ENCODE measurements at regions of chr2 and their contacts with region 1.

Region 1: DNA sequence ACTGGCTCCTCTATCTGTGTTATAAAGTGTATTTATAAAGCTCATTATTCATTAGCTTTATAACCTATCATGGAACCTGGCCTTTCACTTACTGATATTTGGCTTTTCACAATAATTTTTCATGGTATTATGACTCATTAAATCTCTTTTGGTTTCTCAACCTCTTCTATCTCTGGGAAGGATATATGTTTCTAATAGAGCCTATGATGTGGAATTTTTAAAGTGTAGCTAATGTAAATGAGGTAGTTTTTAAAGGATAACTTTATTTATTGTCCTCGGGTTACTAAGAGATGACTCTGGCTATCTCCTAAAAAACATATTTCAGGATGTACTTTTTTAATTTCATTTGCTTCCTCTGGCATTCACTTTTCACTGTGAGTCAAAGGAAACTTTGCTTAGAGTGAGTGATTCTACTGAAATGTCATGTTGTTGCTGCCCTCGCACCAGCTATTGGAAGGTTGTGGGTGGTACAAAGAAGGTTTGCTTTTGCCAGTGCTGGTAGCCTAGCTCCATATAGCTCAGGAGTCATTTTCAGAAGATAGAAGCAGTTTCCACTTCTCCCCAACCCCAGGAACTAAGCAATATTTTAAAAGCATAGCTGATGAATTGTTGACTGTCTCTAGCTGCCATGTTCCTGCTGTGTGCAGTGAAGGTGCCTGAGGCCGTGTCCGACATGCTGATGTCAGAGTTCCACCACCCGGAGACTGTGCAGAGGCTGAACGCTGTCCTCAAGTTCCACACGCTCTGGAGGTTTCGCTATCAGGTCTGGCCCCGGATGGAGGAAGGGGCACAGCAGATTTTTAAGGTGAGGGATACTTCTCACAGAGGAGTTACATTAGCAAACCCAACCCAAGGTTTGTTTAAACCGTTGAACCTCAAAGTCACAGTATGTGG is 85.0 kb upstream of the RPE start:
- DNase-seq: no peak
- ATAC-seq: no peak
- H3K4me3 ChIP-seq: no peak overlapping the region
- H3K4me3 Mint-ChIP-seq: no peak overlapping the region
- H3K27ac ChIP-seq: no peak overlapping the region
- H3K27ac Mint-ChIP-seq: no peak overlapping the region
- H3K4me1 ChIP-seq: no peaks in the 10 kb centered on the region
- H3K4me1 Mint-ChIP-seq: no peaks in the 10 kb centered on the region
- H3K27me3 ChIP-seq: peaks cover 2% of the 10 kb centered on the region in 2 experiments
- H3K27me3 Mint-ChIP-seq: peaks cover 11% of the 10 kb centered on the region in 2 donors

Region 2: GRCh38 chr2:208101716-208102631 is 1815.4 kb before region 1 on chr2:
- CTCF ChIA-PET with region 1: no interaction called
- POLR2A ChIA-PET with region 1: no interaction called
- DNase-seq: no peak
- ATAC-seq: no peak
- H3K4me3 ChIP-seq: no peak overlapping the region
- H3K4me3 Mint-ChIP-seq: no peak overlapping the region
- H3K27ac ChIP-seq: no peak overlapping the region
- H3K27ac Mint-ChIP-seq: peak overlapping the region in 1 of 2 donors; percentile 60
- H3K4me1 ChIP-seq: peaks cover 0 to 2% of the 10 kb centered on the region in 2 experiments
- H3K4me1 Mint-ChIP-seq: peaks cover 23 to 31% (median 28%) of the 10 kb centered on the region in 3 donors
- H3K27me3 ChIP-seq: peaks cover 0 to 8% of the 10 kb centered on the region in 2 experiments
- H3K27me3 Mint-ChIP-seq: peaks cover 2 to 15% of the 10 kb centered on the region in 2 donors

Region 3: GRCh38 chr2:209929369-209929768 is 12.0 kb after region 1 on chr2:
- CTCF ChIA-PET with region 1: no interaction called
- POLR2A ChIA-PET with region 1: interaction called, 3 to 10 read pairs
- DNase-seq: no peak
- ATAC-seq: no peak
- H3K4me3 ChIP-seq: no peak overlapping the region
- H3K4me3 Mint-ChIP-seq: no peak overlapping the region
- H3K27ac ChIP-seq: no peak overlapping the region
- H3K27ac Mint-ChIP-seq: no peak overlapping the region
- H3K4me1 ChIP-seq: no peaks in the 10 kb centered on the region
- H3K4me1 Mint-ChIP-seq: no peaks in the 10 kb centered on the region
- H3K27me3 ChIP-seq: peaks cover 0 to 2% of the 10 kb centered on the region in 2 experiments
- H3K27me3 Mint-ChIP-seq: peaks cover 6 to 7% of the 10 kb centered on the region in 2 donors

Region 4: GRCh38 chr2:211611061-211611518 is 1693.7 kb after region 1 on chr2:
- CTCF ChIA-PET with region 1: no interaction called
- POLR2A ChIA-PET with region 1: no interaction called
- DNase-seq: peak in 1 of 35 experiments; percentile 59
- ATAC-seq: peak in 2 of 4 experiments; percentile 50 to 67
- H3K4me3 ChIP-seq: peak overlapping the region in 1 of 2 donors; percentile 40
- H3K4me3 Mint-ChIP-seq: peak overlapping the region; percentile 69 to 81 (median 80)
- H3K27ac ChIP-seq: peak overlapping the region; percentile 48
- H3K27ac Mint-ChIP-seq: peak overlapping the region; percentile 66 to 89
- H3K4me1 ChIP-seq: peaks cover 0 to 4% of the 10 kb centered on the region in 2 experiments
- H3K4me1 Mint-ChIP-seq: peaks cover 7 to 17% (median 9%) of the 10 kb centered on the region in 3 donors
- H3K27me3 ChIP-seq: no peaks in the 10 kb centered on the region
- H3K27me3 Mint-ChIP-seq: no peaks in the 10 kb centered on the region

Measured in T-cell (primary cell).